ENCODE measurements at regions of chr3 and their contacts with region 1.

Region 1: GRCh38 chr3:12135029-12135657 is 23.6 kb downstream of the TIMP4 start:
- DNase-seq: peak; percentile 83
- ATAC-seq: peak; percentile 90
- H3K4me3 ChIP-seq: no peak overlapping the region
- H3K27ac ChIP-seq: no peak overlapping the region
- H3K4me1 ChIP-seq: peaks cover 15% of the 10 kb centered on the region
- H3K27me3 ChIP-seq: no peaks in the 10 kb centered on the region
- CTCF ChIP-seq: peak; percentile 99

Region 2: GRCh38 chr3:11898611-11899325 is 236.4 kb before region 1 on chr3:
- CTCF ChIA-PET with region 1: no interaction called
- POLR2A ChIA-PET with region 1: no interaction called
- intact Hi-C with region 1: no loop called
- DNase-seq: no peak
- ATAC-seq: no peak
- H3K4me3 ChIP-seq: no peak overlapping the region
- H3K27ac ChIP-seq: no peak overlapping the region
- H3K4me1 ChIP-seq: no peaks in the 10 kb centered on the region
- H3K27me3 ChIP-seq: peaks cover 50% of the 10 kb centered on the region
- CTCF ChIP-seq: no peak

Region 3: DNA sequence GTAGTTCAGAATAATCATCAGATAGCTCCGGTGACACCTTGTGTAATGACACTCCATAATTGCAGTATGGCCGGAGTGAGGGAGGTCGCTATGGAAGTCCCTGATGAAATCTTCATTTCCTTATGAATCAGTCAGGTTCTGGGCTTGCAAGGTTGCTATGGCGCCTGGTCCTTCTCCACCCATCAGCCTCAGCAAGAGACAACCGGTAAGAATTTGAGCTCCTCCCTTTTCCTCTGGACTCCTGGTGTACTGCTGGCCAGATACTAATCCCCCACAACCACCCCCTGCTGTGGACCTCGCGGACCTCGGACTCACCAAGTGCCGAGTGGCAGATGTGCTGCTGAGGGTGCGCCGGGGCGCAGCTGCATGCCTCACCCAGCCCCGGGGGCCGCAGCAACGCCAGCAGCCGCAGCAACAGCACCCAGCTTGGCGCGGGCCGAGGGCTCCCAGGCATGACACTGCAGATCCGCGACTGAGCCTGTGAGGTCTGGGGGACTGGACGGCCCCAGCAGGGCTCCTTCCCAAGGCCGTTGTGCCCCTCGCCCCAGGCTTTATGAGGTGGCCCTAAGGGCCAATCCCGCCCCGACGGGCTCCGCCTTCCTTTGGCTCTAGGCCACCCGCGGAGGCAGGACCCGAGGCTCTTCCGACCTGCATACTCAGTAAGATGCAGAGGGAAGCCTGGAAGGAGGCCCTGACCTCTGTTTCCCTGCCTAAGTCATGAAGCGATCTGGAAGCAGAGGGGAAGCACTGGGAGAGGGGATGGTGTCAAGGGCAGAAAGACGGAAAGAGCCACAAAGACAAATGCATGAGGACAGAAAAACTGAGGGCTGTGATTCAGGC is 23.5 kb after region 1 on chr3 and contains the start of gene TIMP4:
- CTCF ChIA-PET with region 1: no interaction called
- POLR2A ChIA-PET with region 1: no interaction called
- intact Hi-C with region 1: no loop called
- DNase-seq: peak; percentile 27
- ATAC-seq: peak; percentile 29
- H3K4me3 ChIP-seq: peak within 1 kb of the TSS; percentile 61
- H3K27ac ChIP-seq: no peak within 1 kb of the TSS
- H3K4me1 ChIP-seq: peaks cover 30% of the 10 kb centered on the region
- H3K27me3 ChIP-seq: no peaks in the 10 kb centered on the region
- CTCF ChIP-seq: no peak
- total RNA-seq, gene TIMP4: 7.3 and 7.6 TPM in 2 replicates

Region 4: GRCh38 chr3:12175844-12176453 is 40.8 kb after region 1 on chr3:
- CTCF ChIA-PET with region 1: interaction called, 5 read pairs
- POLR2A ChIA-PET with region 1: no interaction called
- intact Hi-C with region 1: loop called (anchors 1 kb)
- DNase-seq: peak; percentile 73
- ATAC-seq: peak; percentile 81
- H3K4me3 ChIP-seq: no peak overlapping the region
- H3K27ac ChIP-seq: peak overlapping the region; percentile 32; the same call in 1 of the 2 replicates
- H3K4me1 ChIP-seq: peaks cover 48% of the 10 kb centered on the region
- H3K27me3 ChIP-seq: no peaks in the 10 kb centered on the region
- CTCF ChIP-seq: peak; percentile 90

Region 5: DNA sequence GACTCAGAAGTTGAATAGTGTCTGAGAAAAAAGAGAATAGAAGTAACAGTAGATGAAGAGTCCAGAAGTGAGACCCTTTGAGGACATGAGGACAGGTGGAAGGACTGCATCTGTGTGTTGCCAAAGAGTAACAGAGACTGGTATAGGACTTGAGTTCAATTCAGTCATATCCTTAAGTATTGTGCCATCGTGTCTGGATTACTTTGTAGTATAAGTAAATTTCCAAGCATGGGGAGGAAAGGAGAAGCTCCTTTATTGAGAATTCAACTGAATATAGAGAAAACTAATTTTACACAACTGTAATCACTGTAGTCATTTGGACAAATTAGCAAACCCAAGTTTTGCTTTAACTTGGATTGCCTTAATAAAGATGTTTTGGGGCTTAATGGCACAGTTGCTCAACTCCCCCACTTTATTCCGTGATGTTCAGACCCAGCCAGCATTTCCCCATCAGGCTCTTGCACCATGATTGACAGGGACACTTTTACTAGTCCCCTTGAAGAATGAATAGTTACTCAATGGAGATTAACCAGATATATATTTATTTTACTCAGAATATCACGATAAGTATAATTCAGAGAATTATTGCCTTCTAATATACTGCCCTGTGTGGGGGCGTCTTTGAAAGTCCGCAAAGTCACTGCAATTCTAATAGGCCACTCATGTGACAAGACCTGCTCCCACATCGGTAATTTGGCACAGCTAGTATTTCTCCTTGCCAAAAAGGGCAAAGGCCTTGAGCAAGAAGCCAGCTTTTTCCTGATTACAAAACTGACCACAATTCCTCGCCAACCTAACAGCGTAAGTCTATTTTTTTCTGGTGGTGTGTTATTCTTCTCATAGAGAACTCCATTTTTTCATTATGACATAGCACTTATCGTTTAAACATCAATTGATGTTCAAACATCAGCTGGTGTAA is 215.0 kb after region 1 on chr3:
- CTCF ChIA-PET with region 1: no interaction called
- POLR2A ChIA-PET with region 1: no interaction called
- intact Hi-C with region 1: loop called (anchors 5 kb)
- DNase-seq: no peak
- ATAC-seq: no peak
- H3K4me3 ChIP-seq: no peak overlapping the region
- H3K27ac ChIP-seq: no peak overlapping the region
- H3K4me1 ChIP-seq: peaks cover 56% of the 10 kb centered on the region
- H3K27me3 ChIP-seq: no peaks in the 10 kb centered on the region
- CTCF ChIP-seq: no peak

Region 6: DNA sequence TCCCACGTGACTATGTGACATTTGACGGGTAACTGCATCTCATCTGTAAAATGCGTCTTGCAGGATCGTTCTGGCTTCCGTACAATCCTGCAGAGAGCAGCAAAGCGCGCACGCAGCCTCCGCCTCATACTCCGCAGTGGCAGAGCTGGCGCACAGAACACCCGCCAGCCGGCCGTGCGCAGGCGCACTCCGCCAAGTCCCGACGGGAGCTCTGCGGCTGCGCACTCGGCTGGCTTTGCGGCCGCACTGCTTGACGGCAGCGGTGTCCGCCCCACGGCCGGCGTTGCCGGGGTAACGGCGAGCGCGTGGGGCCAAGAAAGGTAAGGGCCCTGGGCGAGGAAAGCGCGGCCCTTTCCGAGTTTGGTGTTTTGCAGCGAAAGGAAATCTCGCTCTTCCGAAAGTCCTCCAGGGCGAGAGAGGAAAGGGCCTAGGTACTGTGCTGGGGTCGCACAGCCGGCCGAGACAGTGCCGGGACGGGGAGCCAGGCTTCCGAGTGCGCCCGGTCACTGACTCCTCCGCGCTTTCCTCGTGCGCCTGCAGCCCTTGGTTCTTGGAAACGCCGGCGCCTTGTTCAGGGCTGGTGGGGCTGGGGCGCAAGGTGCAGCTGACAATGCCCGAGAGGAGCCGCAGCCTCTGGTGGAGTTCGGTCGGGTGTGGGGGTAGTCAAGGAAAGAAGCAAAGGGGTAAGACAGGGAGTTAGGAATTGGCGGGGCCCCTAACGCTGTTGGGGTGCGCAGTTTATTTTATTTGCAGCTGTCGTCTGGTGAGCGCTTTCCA is 349.2 kb after region 1 on chr3 and contains the start of gene TSEN2:
- CTCF ChIA-PET with region 1: interaction called, 20 read pairs
- POLR2A ChIA-PET with region 1: no interaction called
- intact Hi-C with region 1: loop called (anchors 1 kb)
- DNase-seq: peak; percentile 98
- ATAC-seq: peak; percentile 80
- H3K4me3 ChIP-seq: peak within 1 kb of the TSS; percentile 81
- H3K27ac ChIP-seq: peak within 1 kb of the TSS; percentile 81
- H3K4me1 ChIP-seq: peaks cover 57% of the 10 kb centered on the region
- H3K27me3 ChIP-seq: no peaks in the 10 kb centered on the region
- CTCF ChIP-seq: no peak
- total RNA-seq, gene TSEN2: 40.2 and 51.0 TPM in 2 replicates

Region 7: DNA sequence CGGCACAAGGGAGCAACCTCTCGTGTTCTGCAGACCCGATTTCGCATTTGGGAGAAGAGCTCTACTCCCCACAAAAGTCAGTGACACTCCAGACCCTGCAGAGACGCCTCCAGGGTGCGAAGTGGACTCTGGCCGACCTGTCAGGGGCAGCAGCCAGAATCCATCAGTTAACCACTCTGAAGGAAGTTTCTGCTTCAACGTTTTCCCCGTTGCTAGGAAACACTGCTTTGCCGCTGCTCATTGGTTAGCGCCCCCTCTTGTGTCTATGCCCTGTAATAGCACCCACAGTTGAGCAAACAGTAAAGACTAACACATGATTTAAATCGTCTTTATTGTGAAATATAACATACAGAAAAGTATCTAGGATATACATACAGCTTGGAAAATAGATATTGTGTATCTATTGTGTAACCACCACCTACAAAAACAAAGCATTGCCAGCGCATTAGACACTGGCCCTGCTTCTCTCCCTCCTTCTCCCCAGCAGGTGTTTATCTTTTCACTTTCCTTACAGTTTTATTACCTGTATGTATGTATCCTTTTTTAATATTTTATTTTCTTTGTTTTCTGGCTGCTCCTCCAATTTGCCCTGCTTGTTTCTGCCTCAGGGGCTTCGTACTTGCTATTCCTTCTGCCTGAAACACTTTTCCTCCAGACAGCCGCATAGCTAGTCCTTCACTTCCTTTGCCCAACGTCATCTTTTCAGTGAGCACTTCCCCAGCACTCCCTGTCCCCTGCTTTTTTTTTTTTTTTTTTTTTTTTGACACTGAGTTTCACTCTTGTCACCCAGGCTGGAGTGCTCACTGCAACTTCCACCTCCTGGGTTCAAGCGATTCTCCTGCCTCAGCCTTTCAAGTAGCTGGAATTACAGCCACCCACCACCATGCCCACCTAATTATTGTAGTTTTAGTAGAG is 585.1 kb after region 1 on chr3:
- CTCF ChIA-PET with region 1: no interaction called
- POLR2A ChIA-PET with region 1: no interaction called
- intact Hi-C with region 1: loop called (anchors 1 kb)
- DNase-seq: peak; percentile 90
- ATAC-seq: peak; percentile 95
- H3K4me3 ChIP-seq: peak overlapping the region; percentile 55
- H3K27ac ChIP-seq: no peak overlapping the region
- H3K4me1 ChIP-seq: no peaks in the 10 kb centered on the region; the same call in 1 of the 2 replicates
- H3K27me3 ChIP-seq: no peaks in the 10 kb centered on the region
- CTCF ChIP-seq: peak; percentile 95

Measured in PC-3 (cell line).